A673 (cell line): ENCODE measurements at regions of chr14 and their contacts with region 1.

Region 1: DNA sequence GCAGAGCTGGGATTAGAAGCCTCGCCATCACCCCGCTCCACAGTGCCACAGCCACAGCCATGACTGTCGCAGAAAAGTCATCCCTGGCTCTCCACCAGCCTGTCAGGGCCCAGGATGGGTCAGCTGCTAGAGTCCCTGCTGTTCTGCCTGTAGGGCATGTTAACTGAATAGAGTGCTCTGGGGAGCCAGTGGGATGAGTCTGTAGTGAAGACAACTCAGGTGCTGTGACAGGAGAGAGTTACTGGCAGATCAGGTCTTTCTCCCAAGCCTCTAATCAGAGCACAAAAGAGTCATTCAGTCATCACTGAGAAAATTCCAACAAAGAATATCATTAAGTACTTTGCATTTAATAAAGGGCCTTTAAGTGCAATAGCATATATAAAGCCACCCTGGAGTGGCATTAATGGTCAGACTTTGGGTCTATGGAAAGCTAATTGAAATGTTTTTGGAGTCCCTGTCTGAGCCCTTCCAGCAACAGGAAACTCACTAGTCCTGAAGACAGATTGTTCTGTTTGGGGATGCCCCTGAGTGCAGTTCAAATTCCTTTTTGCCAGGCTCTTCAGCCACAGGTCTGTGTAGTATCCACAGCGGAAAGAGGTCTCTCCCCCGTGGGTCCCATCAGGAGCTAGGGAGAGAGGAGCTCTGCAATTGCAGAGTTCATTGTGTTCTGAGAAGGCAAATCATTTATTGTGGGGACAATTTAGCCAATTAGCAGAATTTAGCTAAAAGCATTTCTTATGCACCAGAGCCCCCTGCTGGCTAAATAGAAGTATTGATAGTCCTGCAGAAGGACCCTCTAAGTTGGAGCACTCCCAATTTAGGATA is 45.2 kb upstream of the C14orf132 start:
- DNase-seq: peak; percentile 70
- H3K4me3 ChIP-seq: no peak overlapping the region
- H3K27ac ChIP-seq: no peak overlapping the region
- H3K4me1 ChIP-seq: no peaks in the 10 kb centered on the region
- H3K27me3 ChIP-seq: no peaks in the 10 kb centered on the region
- CTCF ChIP-seq: peak; percentile 84

Region 2: DNA sequence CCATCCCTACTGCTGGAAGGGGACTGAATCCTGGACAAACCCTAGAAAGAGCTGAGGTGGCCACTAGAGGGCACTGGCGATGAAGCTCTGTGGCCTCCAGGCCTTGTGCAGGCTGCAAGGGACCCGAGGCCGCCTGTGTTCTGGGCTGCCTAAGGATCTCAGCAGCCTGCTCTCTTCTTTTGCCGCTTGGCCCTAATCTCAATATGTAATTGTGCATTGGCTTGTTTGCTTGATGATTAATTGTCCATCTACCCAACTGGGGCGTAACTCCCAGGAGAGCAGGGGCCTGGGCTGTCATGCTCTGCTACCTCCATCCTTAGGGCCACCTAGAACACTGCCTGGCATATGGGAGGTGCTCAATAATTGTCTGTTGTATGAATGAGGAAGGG is 551.4 kb before region 1 on chr14:
- CTCF ChIA-PET with region 1: interaction called, 3 read pairs
- POLR2A ChIA-PET with region 1: no interaction called
- intact Hi-C with region 1: loop called (anchors 2 kb)
- DNase-seq: peak; percentile 82
- H3K4me3 ChIP-seq: no peak overlapping the region
- H3K27ac ChIP-seq: no peak overlapping the region
- H3K4me1 ChIP-seq: no peaks in the 10 kb centered on the region
- H3K27me3 ChIP-seq: no peaks in the 10 kb centered on the region
- CTCF ChIP-seq: peak; percentile 90

Region 3: GRCh38 chr14:95561001-95561412 is 433.0 kb before region 1 on chr14:
- CTCF ChIA-PET with region 1: interaction called, 6 read pairs
- POLR2A ChIA-PET with region 1: no interaction called
- intact Hi-C with region 1: loop called (anchors 1 kb)
- DNase-seq: peak; percentile 86
- H3K4me3 ChIP-seq: no peak overlapping the region
- H3K27ac ChIP-seq: no peak overlapping the region
- H3K4me1 ChIP-seq: no peaks in the 10 kb centered on the region
- H3K27me3 ChIP-seq: no peaks in the 10 kb centered on the region
- CTCF ChIP-seq: peak; percentile 98

Region 4: GRCh38 chr14:95609387-95609990 is 384.5 kb before region 1 on chr14:
- CTCF ChIA-PET with region 1: no interaction called
- POLR2A ChIA-PET with region 1: no interaction called
- intact Hi-C with region 1: loop called (anchors 5 kb)
- DNase-seq: peak; percentile 79
- H3K4me3 ChIP-seq: no peak overlapping the region
- H3K27ac ChIP-seq: no peak overlapping the region
- H3K4me1 ChIP-seq: no peaks in the 10 kb centered on the region
- H3K27me3 ChIP-seq: peaks cover 3% of the 10 kb centered on the region
- CTCF ChIP-seq: peak; percentile 87

Region 5: DNA sequence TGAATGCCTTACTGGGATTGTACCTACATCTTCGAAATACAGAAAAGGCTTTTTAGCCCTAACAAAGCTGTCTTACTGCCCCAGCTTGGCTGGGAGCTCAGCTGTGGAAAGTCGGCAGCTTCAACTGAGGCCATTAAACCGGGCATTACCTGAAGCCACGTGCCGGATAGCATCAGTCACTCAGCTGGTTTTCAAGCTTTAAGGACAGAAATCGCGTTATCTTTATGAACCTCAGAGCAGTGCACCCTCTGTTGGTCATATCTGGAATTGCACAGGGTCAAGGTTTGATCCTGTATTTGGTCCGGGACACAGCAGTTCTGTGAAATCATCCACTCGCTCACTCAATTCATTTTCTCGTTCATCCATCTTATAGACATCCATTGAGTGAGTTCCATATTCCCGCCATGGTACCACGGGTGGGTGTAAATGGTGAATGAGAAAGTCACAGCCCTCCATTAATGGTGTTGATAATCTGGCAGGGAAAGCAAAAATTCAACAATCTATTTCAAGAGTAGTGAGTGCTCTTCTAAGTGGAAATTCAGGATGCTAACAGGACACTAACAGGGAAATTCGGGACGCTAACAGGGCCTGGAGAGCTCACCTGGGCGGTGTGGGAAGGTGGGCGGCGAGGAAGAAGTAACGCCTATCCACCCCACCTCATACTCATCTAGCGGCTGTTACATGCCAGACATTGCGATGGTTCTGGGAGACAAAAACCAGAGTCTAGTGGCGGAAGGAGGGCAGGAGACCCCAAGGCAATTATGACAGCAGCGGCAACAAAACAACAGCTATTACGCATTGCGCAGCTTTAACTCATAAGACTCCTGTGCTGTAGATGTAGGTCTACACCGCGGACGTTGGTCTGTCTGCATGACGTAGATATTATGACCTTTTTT is 219.5 kb before region 1 on chr14:
- CTCF ChIA-PET with region 1: interaction called, 3 read pairs
- POLR2A ChIA-PET with region 1: no interaction called
- intact Hi-C with region 1: loop called (anchors 5 kb)
- DNase-seq: peak; percentile 66
- H3K4me3 ChIP-seq: no peak overlapping the region
- H3K27ac ChIP-seq: no peak overlapping the region
- H3K4me1 ChIP-seq: no peaks in the 10 kb centered on the region
- H3K27me3 ChIP-seq: no peaks in the 10 kb centered on the region
- CTCF ChIP-seq: peak; percentile 92

Region 6: DNA sequence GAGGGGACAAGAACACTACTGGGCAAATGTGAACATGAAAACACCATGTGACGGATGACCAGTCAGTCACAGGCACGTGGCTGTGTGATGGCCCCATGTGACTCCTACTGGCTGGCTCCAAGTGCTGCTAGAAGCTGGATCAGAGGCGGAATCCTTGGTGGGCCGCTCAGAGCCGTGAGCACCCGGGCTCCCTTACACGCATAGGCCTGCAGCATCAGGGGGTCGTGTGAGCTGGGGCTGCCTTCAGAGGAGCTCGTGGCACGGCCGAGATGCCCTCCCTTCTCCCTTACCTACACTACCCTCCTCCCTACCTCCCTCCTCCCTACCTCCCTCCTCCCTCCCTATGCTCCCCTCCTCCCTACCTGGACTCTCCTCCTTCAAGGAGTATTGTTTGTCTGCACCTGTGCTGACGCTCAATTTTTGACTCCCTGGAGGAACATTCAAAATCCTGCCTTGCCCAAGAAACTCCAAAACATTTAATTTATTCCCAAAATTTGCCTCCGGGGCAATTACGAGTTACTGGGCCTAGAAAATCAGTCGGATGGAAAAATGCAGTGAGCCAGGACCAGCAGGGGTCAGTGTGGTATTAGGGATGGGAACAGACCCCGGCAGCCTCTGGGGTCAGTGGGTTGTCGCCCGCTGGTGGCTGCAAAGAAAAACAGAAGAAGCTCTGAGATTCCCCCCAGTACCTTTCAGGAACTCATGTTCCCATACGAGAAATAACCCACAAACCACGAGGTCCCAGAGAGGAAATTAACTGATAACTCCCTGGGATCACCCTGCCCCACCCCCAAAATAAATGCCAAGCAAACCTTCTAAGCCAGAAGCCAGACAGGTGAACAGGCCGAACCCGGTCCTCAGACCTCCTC is 106.4 kb after region 1 on chr14:
- CTCF ChIA-PET with region 1: interaction called, 33 read pairs
- POLR2A ChIA-PET with region 1: no interaction called
- intact Hi-C with region 1: no loop called
- DNase-seq: peak; percentile 77
- H3K4me3 ChIP-seq: no peak overlapping the region
- H3K27ac ChIP-seq: no peak overlapping the region
- H3K4me1 ChIP-seq: peaks cover 7% of the 10 kb centered on the region
- H3K27me3 ChIP-seq: no peaks in the 10 kb centered on the region
- CTCF ChIP-seq: peak; percentile 95

Region 7: GRCh38 chr14:96424109-96424989 is 430.4 kb after region 1 on chr14:
- CTCF ChIA-PET with region 1: no interaction called
- POLR2A ChIA-PET with region 1: no interaction called
- intact Hi-C with region 1: loop called (anchors 5 kb)
- DNase-seq: peak; percentile 86
- H3K4me3 ChIP-seq: peak overlapping the region; percentile 30
- H3K27ac ChIP-seq: no peak overlapping the region
- H3K4me1 ChIP-seq: no peaks in the 10 kb centered on the region
- H3K27me3 ChIP-seq: no peaks in the 10 kb centered on the region
- CTCF ChIP-seq: peak; percentile 84